ENCODE measurements at regions of chr12 and their contacts with region 1.

Region 1: GRCh38 chr12:67943226-67943892 is 45.9 kb upstream of the IFNG-AS1 start:
- DNase-seq: peak; percentile 27
- H3K4me3 Mint-ChIP-seq: no peak overlapping the region
- H3K27ac Mint-ChIP-seq: no peak overlapping the region
- H3K4me1 Mint-ChIP-seq: peaks cover 5% of the 10 kb centered on the region
- H3K27me3 Mint-ChIP-seq: peaks cover 6% of the 10 kb centered on the region

Region 2: GRCh38 chr12:67161322-67161918 is 781.9 kb before region 1 on chr12:
- intact Hi-C with region 1: loop called (anchors 1 kb)
- DNase-seq: peak; percentile 2
- H3K4me3 Mint-ChIP-seq: no peak overlapping the region
- H3K27ac Mint-ChIP-seq: no peak overlapping the region
- H3K4me1 Mint-ChIP-seq: no peaks in the 10 kb centered on the region
- H3K27me3 Mint-ChIP-seq: peaks cover 5% of the 10 kb centered on the region

Region 3: GRCh38 chr12:67441736-67442346 is 501.5 kb before region 1 on chr12:
- intact Hi-C with region 1: loop called (anchors 2 kb)
- DNase-seq: peak; percentile 61
- H3K4me3 Mint-ChIP-seq: no peak overlapping the region
- H3K27ac Mint-ChIP-seq: no peak overlapping the region
- H3K4me1 Mint-ChIP-seq: peaks cover 15% of the 10 kb centered on the region
- H3K27me3 Mint-ChIP-seq: peaks cover 7% of the 10 kb centered on the region

Region 4: GRCh38 chr12:67742461-67742860 is 200.9 kb before region 1 on chr12:
- intact Hi-C with region 1: loop called (anchors 5 kb)
- DNase-seq: no peak
- H3K4me3 Mint-ChIP-seq: no peak overlapping the region
- H3K27ac Mint-ChIP-seq: no peak overlapping the region
- H3K4me1 Mint-ChIP-seq: no peaks in the 10 kb centered on the region
- H3K27me3 Mint-ChIP-seq: peaks cover 2% of the 10 kb centered on the region